Activated CD4-positive, alpha-beta memory T cell treated with anti-CD3 and anti-CD28 coated beads for 36 hours (primary cell): ENCODE measurements at regions of chr3 and their contacts with region 1.

Region 1: DNA sequence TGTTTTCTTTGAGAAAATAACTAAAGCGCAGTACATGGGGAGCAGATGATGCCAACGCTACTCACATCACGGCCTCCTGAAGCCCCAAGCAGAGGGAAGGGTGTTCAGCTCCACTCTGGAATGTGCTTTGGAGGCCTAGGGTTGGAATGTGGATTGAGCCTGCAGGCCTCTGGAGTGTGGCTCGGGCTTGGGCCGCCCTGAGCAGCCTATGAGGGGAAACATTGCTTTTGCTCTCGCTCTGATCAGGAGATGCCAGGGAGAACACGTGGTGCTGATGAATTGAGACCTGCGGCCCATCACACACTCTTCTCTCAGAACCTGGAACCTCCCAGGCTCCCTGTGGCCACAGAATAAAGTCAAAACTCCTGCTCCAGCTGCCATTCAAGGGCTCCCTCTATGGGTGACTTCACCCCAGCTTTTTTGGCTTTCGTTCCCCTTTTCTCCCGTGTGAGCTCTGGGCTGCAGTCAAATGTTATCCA is 23.3 kb downstream of the CCDC13 start:
- DNase-seq: peak; percentile 17
- H3K4me3 Mint-ChIP-seq: no peak overlapping the region
- H3K27ac Mint-ChIP-seq: no peak overlapping the region
- H3K4me1 Mint-ChIP-seq: peaks cover 25% of the 10 kb centered on the region
- H3K27me3 Mint-ChIP-seq: no peaks in the 10 kb centered on the region

Region 2: DNA sequence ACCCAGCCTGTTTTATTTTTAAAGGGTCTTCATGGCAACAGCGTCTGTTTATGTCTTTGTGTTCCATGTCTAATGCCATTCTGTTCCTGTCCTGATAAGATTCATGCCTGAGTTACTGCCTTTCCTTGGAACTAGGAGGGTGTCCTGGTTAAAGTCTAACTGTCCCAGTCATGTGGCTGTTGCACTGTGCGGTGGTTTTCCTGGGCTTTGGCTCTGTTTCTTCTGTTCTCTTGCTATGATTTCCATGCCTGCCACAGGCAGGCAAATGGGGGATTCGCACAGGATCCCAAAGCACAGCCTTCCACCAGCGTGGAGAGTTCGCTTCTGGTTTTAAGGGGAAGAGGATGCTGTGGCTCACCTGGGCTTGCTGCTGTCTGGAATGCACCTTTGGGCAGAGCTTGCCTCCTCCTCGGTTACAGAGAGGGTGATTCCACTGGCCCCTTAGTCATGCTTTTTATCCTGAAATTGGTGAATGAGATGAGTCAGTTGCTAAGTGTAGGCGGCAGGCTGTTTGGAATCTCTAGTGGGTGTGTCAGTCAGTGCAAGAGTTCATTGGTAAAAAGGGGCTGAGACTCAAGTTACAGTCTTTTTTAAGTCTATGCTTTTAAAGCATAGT is 570.6 kb before region 1 on chr3:
- CTCF ChIA-PET with region 1: no interaction called
- POLR2A ChIA-PET with region 1: no interaction called
- intact Hi-C with region 1: no loop called
- DNase-seq: peak; percentile 41
- H3K4me3 Mint-ChIP-seq: no peak overlapping the region
- H3K27ac Mint-ChIP-seq: no peak overlapping the region
- H3K4me1 Mint-ChIP-seq: peaks cover 9% of the 10 kb centered on the region
- H3K27me3 Mint-ChIP-seq: no peaks in the 10 kb centered on the region

Region 3: GRCh38 chr3:42581709-42582473 is 167.9 kb before region 1 on chr3 and contains the start of gene SEC22C:
- CTCF ChIA-PET with region 1: interaction called, 12 read pairs
- POLR2A ChIA-PET with region 1: interaction called, 4 read pairs
- intact Hi-C with region 1: loop called (anchors 1 kb)
- DNase-seq: peak; percentile 98
- H3K4me3 Mint-ChIP-seq: peak within 1 kb of the TSS; percentile 83
- H3K27ac Mint-ChIP-seq: peak within 1 kb of the TSS; percentile 91
- H3K4me1 Mint-ChIP-seq: peaks cover 42% of the 10 kb centered on the region
- H3K27me3 Mint-ChIP-seq: no peaks in the 10 kb centered on the region
- total RNA-seq, gene SEC22C: 47.0 to 49.2 TPM

Region 4: GRCh38 chr3:42660893-42661292 is 88.9 kb before region 1 on chr3:
- CTCF ChIA-PET with region 1: interaction called, 15 read pairs
- POLR2A ChIA-PET with region 1: no interaction called
- intact Hi-C with region 1: no loop called
- DNase-seq: peak; percentile 45
- H3K4me3 Mint-ChIP-seq: no peak overlapping the region
- H3K27ac Mint-ChIP-seq: no peak overlapping the region
- H3K4me1 Mint-ChIP-seq: no peaks in the 10 kb centered on the region
- H3K27me3 Mint-ChIP-seq: no peaks in the 10 kb centered on the region